ENCODE measurements at regions of chr3 and their contacts with region 1.

Region 1: DNA sequence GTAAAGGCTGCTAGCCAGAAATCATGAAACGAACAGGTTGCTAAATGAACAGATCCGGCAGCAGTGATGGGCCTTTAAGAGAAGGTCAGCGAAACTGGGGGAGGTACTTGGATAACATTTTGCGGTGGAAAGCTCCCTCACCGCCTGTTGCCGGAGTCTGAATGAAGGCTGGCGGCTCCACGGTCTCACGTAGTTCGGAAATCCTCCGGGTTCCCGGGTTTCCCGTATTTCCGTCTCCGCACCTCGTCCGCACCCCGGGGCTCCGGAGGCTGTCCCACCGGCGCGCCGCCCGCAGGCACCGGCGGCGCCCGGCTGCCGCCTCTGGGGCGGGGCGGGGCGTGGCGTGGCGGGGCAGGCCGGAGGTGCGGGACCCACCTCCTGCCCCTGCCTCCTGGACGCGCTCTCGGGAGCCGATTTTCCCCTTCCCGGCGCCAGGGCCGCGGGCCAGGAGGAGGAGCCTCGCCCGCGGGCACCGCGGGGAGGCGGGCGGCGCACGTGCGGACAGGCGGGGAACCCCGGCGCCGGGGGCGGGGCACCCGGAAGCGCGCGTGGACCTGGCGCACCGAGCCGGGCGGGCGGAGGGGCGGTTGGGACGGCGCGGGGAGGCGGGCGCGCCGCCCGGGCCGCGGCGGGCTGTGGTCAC is at the start of gene ZDHHC23:
- DNase-seq: peak; percentile 69 to 85
- H3K4me3 ChIP-seq: peak within 1 kb of the TSS; percentile 81 to 86
- H3K27ac ChIP-seq: peak within 1 kb of the TSS; percentile 55 to 71
- H3K4me1 ChIP-seq: peaks cover 0 to 18% (median 7%) of the 10 kb centered on the region in 4 donors
- H3K27me3 ChIP-seq: no peaks in the 10 kb centered on the region
- CTCF ChIP-seq: no peak

Region 2: GRCh38 chr3:114056130-114057010 is 108.9 kb after region 1 on chr3 and contains the starts of genes CCDC191 and QTRT2:
- intact Hi-C with region 1: loop called (anchors 5 kb)
- DNase-seq: peak; percentile 99
- H3K4me3 ChIP-seq: peak within 1 kb of the TSS; percentile 71 to 82
- H3K27ac ChIP-seq: peak within 1 kb of the TSS; percentile 75 to 78
- H3K4me1 ChIP-seq: peaks cover 0 to 20% (median 12%) of the 10 kb centered on the region in 4 donors
- H3K27me3 ChIP-seq: no peaks in the 10 kb centered on the region
- CTCF ChIP-seq: no peak

Measured in tibial artery (tissue), 4 donors.